Dendritic cell treated with granulocyte-macrophage colony-stimulating factor and Interleukin-4, amounts not matched to agents 40 ng/mL and 50 ng/mL, for 4 days (primary cell): ENCODE measurements at regions of chr1 and their contacts with region 1.

Region 1: GRCh38 chr1:174022080-174022975 is at the start of gene RC3H1:
- H3K4me3 Mint-ChIP-seq: peak within 1 kb of the TSS; percentile 87
- H3K27ac Mint-ChIP-seq: peak within 1 kb of the TSS; percentile 94
- H3K4me1 Mint-ChIP-seq: peaks cover 34% of the 10 kb centered on the region
- H3K27me3 Mint-ChIP-seq: no peaks in the 10 kb centered on the region

Region 2: DNA sequence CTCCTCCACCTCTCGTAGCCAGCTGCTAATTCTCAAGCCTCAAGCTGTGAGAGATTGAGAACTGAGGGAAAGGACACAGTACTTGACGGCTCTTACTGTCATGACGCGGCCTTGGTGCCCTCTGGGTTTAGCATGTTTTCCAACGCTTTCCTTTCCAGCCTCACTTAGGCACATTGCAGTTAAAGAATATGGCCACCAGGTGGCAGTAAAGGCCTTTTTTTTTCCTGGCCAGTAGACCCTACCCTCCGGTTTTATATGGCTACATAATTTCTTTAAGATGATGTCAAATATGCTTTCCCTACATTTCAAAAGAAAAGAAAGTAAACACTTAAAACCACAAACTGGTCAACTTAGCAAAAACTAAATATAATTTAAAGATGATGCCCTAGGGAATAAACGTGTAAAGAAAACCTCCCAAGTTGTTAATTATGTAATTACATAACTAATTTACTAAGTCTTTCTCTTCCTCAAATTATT is 602.0 kb before region 1 on chr1:
- intact Hi-C with region 1: loop called (anchors 5 kb)
- H3K4me3 Mint-ChIP-seq: no peak overlapping the region
- H3K27ac Mint-ChIP-seq: no peak overlapping the region
- H3K4me1 Mint-ChIP-seq: peaks cover 62% of the 10 kb centered on the region
- H3K27me3 Mint-ChIP-seq: no peaks in the 10 kb centered on the region

Region 3: GRCh38 chr1:174159252-174160108 is 137.2 kb after region 1 on chr1 and contains the start of gene RABGAP1L:
- intact Hi-C with region 1: loop called (anchors 5 kb)
- H3K4me3 Mint-ChIP-seq: peak within 1 kb of the TSS; percentile 96
- H3K27ac Mint-ChIP-seq: peak within 1 kb of the TSS; percentile 90
- H3K4me1 Mint-ChIP-seq: peaks cover 39% of the 10 kb centered on the region
- H3K27me3 Mint-ChIP-seq: no peaks in the 10 kb centered on the region

Region 4: GRCh38 chr1:174999216-174999925 is 977.0 kb after region 1 on chr1:
- intact Hi-C with region 1: loop called (anchors 10 kb)
- H3K4me3 Mint-ChIP-seq: no peak overlapping the region
- H3K27ac Mint-ChIP-seq: no peak overlapping the region
- H3K4me1 Mint-ChIP-seq: peaks cover 37% of the 10 kb centered on the region
- H3K27me3 Mint-ChIP-seq: no peaks in the 10 kb centered on the region